Stomach (tissue), 19 donors: ENCODE measurements at regions of chr6 and their contacts with region 1.

Region 1: DNA sequence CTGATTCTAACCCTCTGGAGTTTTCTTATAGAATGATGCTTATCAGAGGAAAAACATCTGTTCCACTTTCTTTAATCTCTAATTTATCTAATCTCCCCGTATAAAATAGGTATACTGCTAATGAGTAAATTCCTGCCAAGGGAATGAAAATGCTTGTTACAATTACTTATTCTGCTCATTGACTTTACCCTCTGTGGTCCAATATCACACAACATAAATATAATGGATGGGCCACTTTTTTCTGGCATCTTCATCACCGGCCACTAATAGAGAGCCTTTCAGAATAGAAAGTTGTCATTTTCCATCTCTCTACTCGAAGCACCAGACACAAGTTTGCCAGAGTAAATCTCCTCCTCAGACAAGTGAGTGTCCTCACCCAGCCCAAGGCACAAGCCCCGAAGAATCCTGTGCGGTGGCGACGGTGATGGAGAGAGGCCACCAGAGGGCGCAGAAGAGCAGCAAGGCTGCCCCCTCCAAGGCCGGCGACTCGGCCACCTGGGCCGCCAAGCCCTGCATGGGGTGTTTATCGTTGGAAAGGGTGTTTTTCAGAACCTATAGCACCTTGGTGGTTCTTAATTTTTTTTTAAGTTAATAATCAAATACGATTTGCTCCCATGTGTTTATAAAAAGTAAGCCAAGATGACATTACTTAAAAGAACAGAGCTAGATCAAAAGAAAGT is 212.9 kb upstream of the ARID1B start:
- DNase-seq: peak; percentile 87 to 92
- H3K4me3 ChIP-seq: no peak overlapping the region
- H3K27ac ChIP-seq: peak overlapping the region in 1 of 5 donors; percentile 16
- H3K4me1 ChIP-seq: peaks cover 0 to 13% (median 6%) of the 10 kb centered on the region in 4 donors
- H3K27me3 ChIP-seq: no peaks in the 10 kb centered on the region
- CTCF ChIP-seq: peak in 5 of 7 experiments; percentile 86 to 93 (median 91)
- EP300 ChIP-seq: no peak
- POLR2A ChIP-seq: no peak

Region 2: GRCh38 chr6:156319707-156320106 is 244.6 kb before region 1 on chr6:
- intact Hi-C with region 1: no loop called
- DNase-seq: no peak
- H3K4me3 ChIP-seq: no peak overlapping the region
- H3K27ac ChIP-seq: no peak overlapping the region
- H3K4me1 ChIP-seq: no peaks in the 10 kb centered on the region
- H3K27me3 ChIP-seq: no peaks in the 10 kb centered on the region
- CTCF ChIP-seq: no peak
- EP300 ChIP-seq: no peak
- POLR2A ChIP-seq: no peak

Region 3: GRCh38 chr6:156517088-156517487 is 47.2 kb before region 1 on chr6:
- intact Hi-C with region 1: no loop called
- DNase-seq: peak in 1 of 2 donors; percentile 29
- H3K4me3 ChIP-seq: no peak overlapping the region
- H3K27ac ChIP-seq: no peak overlapping the region
- H3K4me1 ChIP-seq: no peaks in the 10 kb centered on the region
- H3K27me3 ChIP-seq: no peaks in the 10 kb centered on the region
- CTCF ChIP-seq: no peak
- EP300 ChIP-seq: no peak
- POLR2A ChIP-seq: no peak

Region 4: DNA sequence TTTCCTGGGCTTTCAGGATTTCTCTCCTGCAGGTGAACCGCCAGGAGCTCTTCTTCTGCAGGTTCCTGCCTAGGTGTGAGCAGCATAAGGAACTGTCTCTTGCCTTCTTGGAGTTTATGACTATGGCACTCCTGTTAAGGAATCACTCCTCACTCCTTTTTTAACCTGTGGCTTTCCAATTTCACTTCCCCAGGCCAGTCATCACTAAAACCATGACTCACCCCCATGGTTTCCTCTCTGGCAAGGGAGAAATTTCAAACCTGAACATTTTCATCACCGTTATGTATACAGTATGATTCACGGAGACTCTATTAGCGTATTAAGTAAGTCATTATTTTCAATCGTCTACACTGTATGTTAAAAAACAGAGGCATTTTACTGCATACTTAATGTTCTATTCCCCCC is 134.8 kb after region 1 on chr6:
- intact Hi-C with region 1: loop called (anchors 10 kb)
- DNase-seq: no peak
- H3K4me3 ChIP-seq: no peak overlapping the region
- H3K27ac ChIP-seq: no peak overlapping the region
- H3K4me1 ChIP-seq: no peaks in the 10 kb centered on the region
- H3K27me3 ChIP-seq: no peaks in the 10 kb centered on the region
- CTCF ChIP-seq: no peak
- EP300 ChIP-seq: no peak
- POLR2A ChIP-seq: no peak

Region 5: GRCh38 chr6:156767603-156768467 is 203.6 kb after region 1 on chr6:
- intact Hi-C with region 1: loop called (anchors 10 kb)
- DNase-seq: no peak
- H3K4me3 ChIP-seq: no peak overlapping the region
- H3K27ac ChIP-seq: no peak overlapping the region
- H3K4me1 ChIP-seq: no peaks in the 10 kb centered on the region
- H3K27me3 ChIP-seq: no peaks in the 10 kb centered on the region
- CTCF ChIP-seq: no peak
- EP300 ChIP-seq: no peak
- POLR2A ChIP-seq: no peak

Region 6: DNA sequence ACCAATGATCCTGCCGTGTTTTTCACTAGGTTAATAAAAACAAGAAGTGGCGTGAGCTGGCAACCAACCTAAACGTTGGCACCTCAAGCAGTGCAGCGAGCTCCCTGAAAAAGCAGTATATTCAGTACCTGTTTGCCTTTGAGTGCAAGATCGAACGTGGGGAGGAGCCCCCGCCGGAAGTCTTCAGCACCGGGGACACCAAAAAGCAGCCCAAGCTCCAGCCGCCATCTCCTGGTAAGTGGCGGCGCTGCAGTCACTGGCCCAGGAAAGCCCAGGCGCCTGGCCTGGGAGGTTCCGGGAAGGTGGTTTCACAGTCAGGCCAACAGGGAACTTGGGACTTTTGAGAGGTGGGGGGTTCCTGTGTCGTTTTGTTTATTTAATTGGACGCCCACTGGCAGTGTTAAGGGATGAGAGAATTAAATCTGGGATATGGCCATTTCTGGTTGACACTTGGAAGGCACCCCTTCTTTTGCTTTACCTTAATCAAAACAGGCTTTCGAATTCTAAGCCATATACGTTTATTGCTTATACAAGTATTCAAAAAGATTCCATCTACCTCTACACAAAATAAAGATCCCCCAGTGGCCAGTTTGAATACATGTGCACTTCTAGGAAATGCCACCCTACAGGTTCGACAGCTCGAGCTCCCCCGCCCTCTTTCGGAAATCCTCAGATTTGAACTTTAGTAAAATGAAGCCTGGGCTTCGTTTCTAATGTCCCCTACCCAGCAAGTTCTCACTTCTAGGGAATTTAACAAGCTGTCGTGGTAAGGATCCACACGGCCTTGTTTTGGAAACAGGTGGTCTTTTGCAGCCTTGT is 620.1 kb after region 1 on chr6:
- intact Hi-C with region 1: loop called (anchors 5 kb)
- DNase-seq: peak; percentile 85 to 90
- H3K4me3 ChIP-seq: no peak overlapping the region
- H3K27ac ChIP-seq: peak overlapping the region in 4 of 5 donors; percentile 1 to 54 (median 37)
- H3K4me1 ChIP-seq: peaks cover 20 to 59% (median 38%) of the 10 kb centered on the region in 4 donors
- H3K27me3 ChIP-seq: no peaks in the 10 kb centered on the region
- CTCF ChIP-seq: peak in 5 of 7 experiments; percentile 86 to 97 (median 93)
- EP300 ChIP-seq: no peak
- POLR2A ChIP-seq: no peak